AG04450 (cell line): ENCODE measurements at regions of chr2 and their contacts with region 1.

Region 1: DNA sequence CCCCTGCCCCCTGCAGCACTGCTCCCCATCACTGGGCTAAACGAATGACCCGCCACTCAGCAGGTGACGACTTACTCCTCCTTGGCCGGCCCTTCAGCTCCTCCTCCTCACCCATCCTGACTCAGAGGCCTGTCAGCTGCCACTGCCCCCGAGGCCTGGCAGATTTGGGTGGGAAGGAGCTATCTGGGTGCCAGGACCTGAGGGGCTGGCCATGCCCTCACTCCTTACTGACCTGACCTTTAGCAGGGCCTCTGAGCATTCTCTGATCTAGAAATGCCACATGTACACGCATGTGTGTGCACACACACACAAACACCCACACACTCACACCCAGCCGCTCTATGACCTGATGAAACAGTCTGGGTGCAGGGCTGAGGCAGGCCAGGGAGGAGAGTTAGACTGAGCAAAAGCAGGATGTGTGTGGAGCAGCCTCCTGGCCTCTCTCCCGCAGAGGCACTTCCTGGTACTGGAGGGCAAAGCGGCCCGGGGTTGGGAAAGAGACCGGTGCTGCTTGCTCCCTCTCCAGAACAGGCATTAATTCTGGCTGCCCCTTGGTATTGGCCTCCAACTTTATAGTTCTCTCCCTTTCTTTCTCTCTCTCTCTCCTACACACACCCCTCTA is 68.0 kb downstream of the ZFP36L2 start:
- DNase-seq: no peak
- H3K4me3 ChIP-seq: no peak overlapping the region
- H3K27ac ChIP-seq: peak overlapping the region; percentile 91
- H3K27me3 ChIP-seq: no peaks in the 10 kb centered on the region
- CTCF ChIP-seq: no peak

Region 2: DNA sequence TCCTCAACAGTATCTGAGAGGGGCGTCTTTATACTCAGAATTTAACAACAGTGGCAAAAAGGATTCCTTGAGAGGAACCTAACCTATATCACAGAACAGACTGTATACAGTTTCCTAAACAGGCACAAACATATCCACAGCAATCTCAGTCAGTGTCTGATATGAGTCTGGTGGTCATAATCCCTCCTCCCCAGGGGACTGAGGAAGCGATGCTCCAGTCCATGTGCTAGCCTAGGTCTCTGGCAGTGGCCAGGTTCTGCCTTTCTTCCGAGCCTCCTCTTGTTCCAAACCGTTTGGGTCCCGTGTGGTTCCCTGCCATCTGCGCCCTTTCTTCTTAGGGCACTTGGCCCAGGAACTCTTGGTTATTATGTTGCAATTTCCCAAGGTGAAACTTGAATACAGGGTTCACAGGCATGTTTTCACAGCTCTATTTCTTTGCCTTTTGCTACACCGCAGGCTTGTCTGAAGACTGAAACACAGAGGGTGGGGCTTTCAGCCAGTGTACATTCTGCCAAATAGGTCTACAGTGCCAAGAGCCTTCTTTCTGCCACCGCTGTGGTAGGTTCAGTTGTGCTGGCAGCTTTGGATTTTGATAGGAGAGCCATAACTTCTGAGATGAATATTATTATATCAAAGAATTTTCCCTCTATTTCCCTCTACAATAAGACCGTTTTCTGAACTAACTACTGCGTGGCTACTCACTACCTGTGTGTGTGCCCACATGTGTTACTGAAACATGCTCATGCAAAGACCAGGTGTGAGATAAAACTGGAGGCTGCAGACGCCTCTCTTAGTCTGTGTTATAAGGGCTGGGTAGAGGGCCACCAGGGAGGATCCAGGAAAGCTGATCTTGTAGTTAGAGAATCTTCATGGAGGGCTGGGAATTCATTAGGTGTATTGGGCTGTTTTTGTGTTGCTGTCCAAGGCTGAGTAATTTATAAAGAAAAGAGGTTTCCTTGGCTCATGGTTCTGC is 291.0 kb before region 1 on chr2:
- CTCF ChIA-PET with region 1: interaction called, 10 read pairs
- POLR2A ChIA-PET with region 1: no interaction called
- DNase-seq: no peak
- H3K4me3 ChIP-seq: no peak overlapping the region
- H3K27ac ChIP-seq: no peak overlapping the region
- H3K27me3 ChIP-seq: peaks cover 2% of the 10 kb centered on the region
- CTCF ChIP-seq: no peak